ENCODE measurements at regions of chr3 and their contacts with region 1.

Region 1: DNA sequence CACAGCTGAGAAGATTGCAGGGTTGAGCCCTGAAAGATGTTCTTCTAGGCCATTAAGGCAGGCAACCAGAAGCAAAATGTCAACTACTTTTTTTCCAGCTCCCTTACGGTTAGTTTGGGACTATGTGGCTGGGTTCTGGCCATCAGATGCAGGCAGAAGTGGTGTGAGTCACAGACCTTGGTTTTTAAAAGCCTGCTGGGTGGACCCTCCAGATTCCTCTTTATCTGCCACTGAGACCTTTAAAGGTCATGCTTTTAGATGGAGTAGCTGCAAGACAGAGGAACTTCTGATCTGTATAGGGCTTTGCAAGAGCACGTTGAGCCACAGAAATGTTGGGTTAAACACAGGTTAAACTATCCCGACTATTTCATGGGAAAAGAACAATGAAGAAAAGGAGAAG is 102.9 kb downstream of the CHST2 start:
- DNase-seq: no peak
- ATAC-seq: no peak
- H3K4me3 ChIP-seq: no peak overlapping the region
- H3K4me3 Mint-ChIP-seq: no peak overlapping the region
- H3K27ac ChIP-seq: no peak overlapping the region
- H3K27ac Mint-ChIP-seq: no peak overlapping the region
- H3K4me1 ChIP-seq: peaks cover 0 to 9% of the 10 kb centered on the region in 2 experiments
- H3K4me1 Mint-ChIP-seq: peaks cover 7 to 10% (median 7%) of the 10 kb centered on the region in 3 donors
- H3K27me3 ChIP-seq: peaks cover 0 to 2% of the 10 kb centered on the region in 2 experiments
- H3K27me3 Mint-ChIP-seq: no peaks in the 10 kb centered on the region

Region 2: GRCh38 chr3:142647856-142648255 is 574.6 kb before region 1 on chr3:
- CTCF ChIA-PET with region 1: interaction called in 1 of 2 experiments, 17 read pairs
- POLR2A ChIA-PET with region 1: no interaction called
- DNase-seq: no peak
- ATAC-seq: no peak
- H3K4me3 ChIP-seq: no peak overlapping the region
- H3K4me3 Mint-ChIP-seq: no peak overlapping the region
- H3K27ac ChIP-seq: no peak overlapping the region
- H3K27ac Mint-ChIP-seq: no peak overlapping the region
- H3K4me1 ChIP-seq: no peaks in the 10 kb centered on the region
- H3K4me1 Mint-ChIP-seq: no peaks in the 10 kb centered on the region
- H3K27me3 ChIP-seq: no peaks in the 10 kb centered on the region
- H3K27me3 Mint-ChIP-seq: peaks cover 0 to 5% of the 10 kb centered on the region in 2 donors

Region 3: GRCh38 chr3:143241481-143241951 is 19.0 kb after region 1 on chr3:
- CTCF ChIA-PET with region 1: no interaction called
- POLR2A ChIA-PET with region 1: no interaction called
- DNase-seq: no peak
- ATAC-seq: no peak
- H3K4me3 ChIP-seq: no peak overlapping the region
- H3K4me3 Mint-ChIP-seq: no peak overlapping the region
- H3K27ac ChIP-seq: no peak overlapping the region
- H3K27ac Mint-ChIP-seq: no peak overlapping the region
- H3K4me1 ChIP-seq: peaks cover 0 to 5% of the 10 kb centered on the region in 2 experiments
- H3K4me1 Mint-ChIP-seq: peaks cover 7 to 13% (median 10%) of the 10 kb centered on the region in 3 donors
- H3K27me3 ChIP-seq: no peaks in the 10 kb centered on the region
- H3K27me3 Mint-ChIP-seq: no peaks in the 10 kb centered on the region

Region 4: DNA sequence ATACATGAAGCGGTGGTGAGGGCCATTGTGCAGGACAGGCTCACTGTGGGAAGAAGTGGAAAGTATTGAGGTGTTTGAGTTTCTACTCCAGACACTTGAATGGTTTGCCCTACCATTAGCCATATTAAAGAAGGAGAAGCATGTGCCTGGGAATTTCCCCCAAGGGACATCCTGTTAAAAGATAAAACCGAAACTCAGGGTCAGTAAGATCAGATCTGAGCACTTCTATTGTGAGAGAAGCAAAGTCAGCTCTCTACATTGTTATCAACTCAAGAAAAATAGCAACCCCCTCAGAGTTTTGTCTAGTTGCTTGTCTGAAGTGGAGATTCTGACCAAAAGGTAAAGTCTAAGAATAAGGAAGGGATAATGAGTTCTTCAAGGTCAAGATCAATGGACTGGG is 166.9 kb after region 1 on chr3:
- CTCF ChIA-PET with region 1: no interaction called
- POLR2A ChIA-PET with region 1: no interaction called
- DNase-seq: no peak
- ATAC-seq: no peak
- H3K4me3 ChIP-seq: no peak overlapping the region
- H3K4me3 Mint-ChIP-seq: no peak overlapping the region
- H3K27ac ChIP-seq: no peak overlapping the region
- H3K27ac Mint-ChIP-seq: no peak overlapping the region
- H3K4me1 ChIP-seq: no peaks in the 10 kb centered on the region
- H3K4me1 Mint-ChIP-seq: no peaks in the 10 kb centered on the region
- H3K27me3 ChIP-seq: no peaks in the 10 kb centered on the region
- H3K27me3 Mint-ChIP-seq: no peaks in the 10 kb centered on the region

Region 5: DNA sequence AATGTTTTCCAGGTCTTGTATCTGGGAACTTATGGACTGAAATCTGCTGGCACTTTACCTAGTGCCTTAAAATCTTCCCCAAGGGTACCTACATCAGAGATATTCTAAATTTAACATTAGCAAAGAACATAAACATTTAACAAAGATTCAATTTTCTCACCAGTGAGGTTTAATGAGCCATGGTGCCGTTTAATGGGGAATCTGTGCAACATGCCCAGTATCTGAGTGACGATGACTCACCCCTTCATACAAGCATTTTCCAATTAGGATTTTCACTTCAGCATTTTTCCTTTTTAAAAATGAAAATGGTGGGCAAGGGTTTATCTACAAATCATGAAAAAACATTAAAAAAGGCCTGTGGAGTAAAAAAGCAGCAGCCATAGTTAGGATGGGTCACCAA is 436.4 kb after region 1 on chr3:
- CTCF ChIA-PET with region 1: no interaction called
- POLR2A ChIA-PET with region 1: no interaction called
- DNase-seq: no peak
- ATAC-seq: no peak
- H3K4me3 ChIP-seq: no peak overlapping the region
- H3K4me3 Mint-ChIP-seq: no peak overlapping the region
- H3K27ac ChIP-seq: no peak overlapping the region
- H3K27ac Mint-ChIP-seq: no peak overlapping the region
- H3K4me1 ChIP-seq: no peaks in the 10 kb centered on the region
- H3K4me1 Mint-ChIP-seq: no peaks in the 10 kb centered on the region
- H3K27me3 ChIP-seq: no peaks in the 10 kb centered on the region
- H3K27me3 Mint-ChIP-seq: no peaks in the 10 kb centered on the region